ENCODE measurements at regions of chr12 and their contacts with region 1.

Region 1: GRCh38 chr12:14365294-14366208 is at the start of gene ATF7IP:
- DNase-seq: peak; percentile 96
- ATAC-seq: peak; percentile 98 to 99
- total RNA-seq, gene ATF7IP: 55.0 to 59.4 TPM

Region 2: GRCh38 chr12:14257734-14258574 is 107.6 kb before region 1 on chr12:
- intact Hi-C with region 1: loop called (anchors 2 kb)
- DNase-seq: peak; percentile 92
- ATAC-seq: peak; percentile 82 to 88

Region 3: GRCh38 chr12:14567351-14568162 is 202.0 kb after region 1 on chr12 and contains the start of gene PLBD1:
- intact Hi-C with region 1: loop called in 1 of 2 experiments (anchors 10 kb)
- DNase-seq: peak; percentile 77
- ATAC-seq: peak; percentile 94
- total RNA-seq, gene PLBD1: 22.0 to 30.9 TPM

Measured in left cardiac atrium (tissue), 4 donors.